Left ventricle myocardium superior (tissue), 1 donor: ENCODE measurements at regions of chr3 and their contacts with region 1.

Region 1: GRCh38 chr3:94069194-94069813 is 6.4 kb downstream of the NSUN3 start:
- DNase-seq: no peak
- ATAC-seq: no peak

Region 2: DNA sequence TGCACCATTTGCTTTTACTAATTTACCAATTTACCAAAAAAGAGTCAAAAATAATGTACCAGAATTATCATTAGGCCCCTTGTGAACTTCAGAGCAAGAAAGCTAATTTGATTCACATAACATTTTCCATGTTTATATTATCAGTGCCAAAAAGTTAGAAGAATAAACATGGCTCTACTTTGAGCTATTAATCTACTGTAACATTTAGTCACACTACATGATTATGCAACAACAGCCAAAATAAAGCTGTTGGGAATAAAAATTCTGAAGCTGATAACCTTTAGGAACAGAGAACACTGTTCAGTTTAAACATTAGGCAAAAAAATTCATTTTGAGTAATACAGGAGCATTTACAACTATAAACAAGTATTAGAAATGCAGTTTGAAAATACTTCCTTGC is 159.2 kb before region 1 on chr3:
- intact Hi-C with region 1: loop called (anchors 5 kb)
- DNase-seq: no peak
- ATAC-seq: peak; percentile 49

Region 3: DNA sequence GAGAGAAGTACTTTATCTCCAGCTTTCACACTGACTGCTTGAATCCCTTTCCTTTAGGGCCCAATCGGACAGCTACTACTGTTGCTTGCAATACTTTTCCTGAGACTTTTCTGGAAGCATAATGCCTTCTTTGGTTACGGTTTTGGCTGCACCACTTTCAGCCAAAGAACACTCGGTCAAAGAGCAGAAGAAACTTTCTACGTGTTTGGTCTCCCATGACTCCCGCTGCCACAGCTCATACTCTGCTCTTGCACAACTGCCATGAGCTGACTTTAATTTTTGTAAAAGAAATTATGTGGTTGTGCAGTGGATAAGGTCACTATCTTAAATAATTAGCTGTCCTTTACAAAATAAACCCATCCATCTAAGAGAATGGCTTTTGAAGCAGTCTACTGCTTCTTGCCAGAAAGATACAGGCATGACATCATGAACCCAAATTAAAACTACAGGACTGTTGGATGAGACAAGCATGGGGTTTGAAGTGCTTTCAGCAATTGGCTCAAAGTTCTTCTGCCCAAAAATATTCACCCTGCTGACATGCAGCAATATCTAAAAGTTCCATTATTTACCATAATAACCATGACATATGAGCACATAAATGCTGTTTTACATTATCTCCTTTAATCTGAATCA is 137.6 kb before region 1 on chr3:
- intact Hi-C with region 1: no loop called
- DNase-seq: no peak
- ATAC-seq: peak; percentile 84

Region 4: DNA sequence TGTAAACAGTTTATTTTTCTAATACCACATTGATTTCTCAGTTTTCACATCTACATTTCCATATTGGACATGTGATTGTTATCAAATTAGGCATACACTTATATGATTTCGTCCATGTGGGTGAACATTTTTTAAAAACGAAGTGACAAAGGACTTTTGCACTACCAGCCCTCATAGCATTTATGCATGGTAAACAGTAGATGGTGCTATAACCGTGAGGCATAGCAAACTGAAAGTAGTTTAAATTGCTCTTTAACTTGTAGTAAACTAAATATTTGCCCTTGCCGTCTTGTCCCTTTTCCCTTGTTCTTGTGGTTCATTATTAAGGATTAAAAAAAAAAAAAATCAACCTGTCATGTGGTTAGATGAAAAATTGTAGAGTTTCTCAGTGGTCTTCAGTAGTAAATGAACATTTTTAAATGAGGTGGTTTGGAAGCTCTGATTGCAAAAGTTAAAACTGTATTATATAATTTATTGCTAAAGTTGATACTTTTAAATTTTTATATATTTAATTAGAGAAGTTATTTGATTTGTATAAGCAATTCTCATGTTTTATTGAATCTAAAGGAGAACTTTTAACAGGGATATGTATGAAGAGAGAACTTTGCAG is 64.9 kb before region 1 on chr3:
- intact Hi-C with region 1: loop called (anchors 5 kb)
- DNase-seq: no peak
- ATAC-seq: peak; percentile 72

Region 5: DNA sequence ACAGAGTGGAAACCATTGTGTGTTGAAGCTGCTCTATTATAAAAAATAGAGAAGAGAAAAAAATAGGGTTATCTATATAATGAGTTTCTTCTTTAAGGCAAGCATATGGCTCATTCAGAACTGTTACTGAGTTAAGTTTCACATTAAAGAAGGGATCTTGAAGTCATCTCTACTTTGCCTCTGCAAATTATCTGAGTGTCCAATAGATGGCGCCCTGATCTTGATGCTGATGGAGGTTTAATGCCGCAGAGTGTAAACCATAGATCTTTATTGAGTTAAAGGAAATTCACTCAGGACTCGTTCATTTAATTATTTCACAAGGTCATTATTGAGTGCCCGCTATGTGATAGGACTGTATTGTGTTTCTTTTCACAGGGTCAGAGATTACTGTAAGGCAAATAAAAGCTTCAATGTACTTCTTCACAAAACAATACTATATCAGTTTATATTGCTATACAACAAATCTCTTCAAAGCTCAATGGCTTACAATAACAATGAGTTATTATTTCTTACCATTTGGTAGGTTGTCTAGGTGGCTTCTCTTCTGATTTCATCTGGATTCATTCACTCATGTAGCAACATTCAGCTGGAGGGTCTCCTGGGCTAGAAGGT is 165.0 kb after region 1 on chr3:
- intact Hi-C with region 1: no loop called
- DNase-seq: no peak
- ATAC-seq: no peak

Region 6: DNA sequence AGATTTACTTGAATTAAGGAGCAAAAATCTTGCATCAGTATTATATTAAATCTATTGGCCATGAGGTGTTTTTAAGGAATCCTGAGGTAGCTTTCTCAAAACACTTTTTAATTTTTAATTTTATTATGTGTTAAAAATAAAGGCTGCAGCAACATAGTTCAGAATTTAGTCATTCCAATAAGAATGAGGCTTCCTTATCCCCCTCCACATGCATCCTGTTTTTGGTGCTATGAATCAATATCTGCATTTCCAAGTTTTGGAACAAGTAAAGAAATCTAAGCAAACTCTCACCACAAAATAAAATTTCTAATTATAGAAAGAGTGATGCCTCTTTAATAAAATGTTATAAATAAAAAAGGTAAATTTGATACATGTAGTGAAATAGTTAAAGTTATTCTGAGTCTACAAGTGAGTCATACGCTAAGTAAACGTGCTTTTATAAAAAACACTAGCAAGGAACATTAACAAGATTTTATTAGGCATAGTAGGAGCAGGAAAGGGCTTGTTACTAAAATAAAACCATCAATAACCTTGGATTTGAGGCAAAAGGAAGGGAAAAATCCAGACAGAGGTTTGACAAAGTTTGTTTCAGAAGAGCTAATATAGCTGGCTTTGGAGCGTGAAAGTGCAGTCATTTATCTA is 1211.5 kb after region 1 on chr3:
- intact Hi-C with region 1: no loop called
- DNase-seq: no peak
- ATAC-seq: no peak